ENCODE measurements at regions of chr1 and their contacts with region 1.

Region 1: GRCh38 chr1:176976225-176976624 is 188.3 kb downstream of the ASTN1 start:
- DNase-seq: no peak
- ATAC-seq: no peak
- H3K4me3 ChIP-seq: no peak overlapping the region
- H3K27ac ChIP-seq: no peak overlapping the region
- H3K4me1 ChIP-seq: no peaks in the 10 kb centered on the region
- H3K27me3 ChIP-seq: peaks cover 0 to 8% (median 0%) of the 10 kb centered on the region in 7 donors
- CTCF ChIP-seq: no peak

Region 2: GRCh38 chr1:177913762-177914540 is 937.7 kb after region 1 on chr1:
- intact Hi-C with region 1: loop called in 1 of 10 experiments (anchors 10 kb)
- DNase-seq: no peak
- ATAC-seq: no peak
- H3K4me3 ChIP-seq: no peak overlapping the region
- H3K27ac ChIP-seq: no peak overlapping the region
- H3K4me1 ChIP-seq: no peaks in the 10 kb centered on the region
- H3K27me3 ChIP-seq: peaks cover 0 to 64% (median 25%) of the 10 kb centered on the region in 7 donors
- CTCF ChIP-seq: peak in 7 of 9 donors; percentile 22 to 43 (median 37)

Measured in heart right ventricle (tissue), 16 donors.